ENCODE measurements at regions of chr17 and their contacts with region 1.

Region 1: GRCh38 chr17:64975329-64976087 is 56.2 kb upstream of the LRRC37A3 start:
- DNase-seq: peak; percentile 96 to 98
- ATAC-seq: peak; percentile 92 to 96
- H3K4me3 ChIP-seq: peak overlapping the region; percentile 73
- H3K27ac ChIP-seq: peak overlapping the region; percentile 95 to 96
- H3K4me1 ChIP-seq: peaks cover 14% of the 10 kb centered on the region
- CTCF ChIP-seq: no peak
- EP300 ChIP-seq: no peak
- POLR2A ChIP-seq: peak; percentile 75
- RAD21 ChIP-seq: peak in 1 of 2 experiments; percentile 40; a peak in 2 of 5 replicates

Region 2: GRCh38 chr17:64991726-64992125 is 16.2 kb after region 1 on chr17:
- CTCF ChIA-PET with region 1: interaction called, 4 read pairs
- POLR2A ChIA-PET with region 1: interaction called, 22 read pairs
- DNase-seq: no peak
- ATAC-seq: no peak
- H3K4me3 ChIP-seq: no peak overlapping the region
- H3K27ac ChIP-seq: peak overlapping the region; percentile 74 to 77
- H3K4me1 ChIP-seq: peaks cover 44% of the 10 kb centered on the region
- CTCF ChIP-seq: no peak
- EP300 ChIP-seq: no peak
- POLR2A ChIP-seq: no peak
- RAD21 ChIP-seq: no peak

Region 3: GRCh38 chr17:65017207-65017774 is 41.8 kb after region 1 on chr17:
- CTCF ChIA-PET with region 1: interaction called, 5 read pairs
- POLR2A ChIA-PET with region 1: interaction called, 24 read pairs
- DNase-seq: no peak
- ATAC-seq: peak; percentile 44 to 66; a peak in 3 of 6 replicates
- H3K4me3 ChIP-seq: peak overlapping the region; percentile 12; the same call in 1 of the 3 replicates
- H3K27ac ChIP-seq: peak overlapping the region; percentile 78
- H3K4me1 ChIP-seq: peaks cover 73% of the 10 kb centered on the region
- CTCF ChIP-seq: no peak
- EP300 ChIP-seq: no peak
- POLR2A ChIP-seq: no peak
- RAD21 ChIP-seq: no peak

Region 4: DNA sequence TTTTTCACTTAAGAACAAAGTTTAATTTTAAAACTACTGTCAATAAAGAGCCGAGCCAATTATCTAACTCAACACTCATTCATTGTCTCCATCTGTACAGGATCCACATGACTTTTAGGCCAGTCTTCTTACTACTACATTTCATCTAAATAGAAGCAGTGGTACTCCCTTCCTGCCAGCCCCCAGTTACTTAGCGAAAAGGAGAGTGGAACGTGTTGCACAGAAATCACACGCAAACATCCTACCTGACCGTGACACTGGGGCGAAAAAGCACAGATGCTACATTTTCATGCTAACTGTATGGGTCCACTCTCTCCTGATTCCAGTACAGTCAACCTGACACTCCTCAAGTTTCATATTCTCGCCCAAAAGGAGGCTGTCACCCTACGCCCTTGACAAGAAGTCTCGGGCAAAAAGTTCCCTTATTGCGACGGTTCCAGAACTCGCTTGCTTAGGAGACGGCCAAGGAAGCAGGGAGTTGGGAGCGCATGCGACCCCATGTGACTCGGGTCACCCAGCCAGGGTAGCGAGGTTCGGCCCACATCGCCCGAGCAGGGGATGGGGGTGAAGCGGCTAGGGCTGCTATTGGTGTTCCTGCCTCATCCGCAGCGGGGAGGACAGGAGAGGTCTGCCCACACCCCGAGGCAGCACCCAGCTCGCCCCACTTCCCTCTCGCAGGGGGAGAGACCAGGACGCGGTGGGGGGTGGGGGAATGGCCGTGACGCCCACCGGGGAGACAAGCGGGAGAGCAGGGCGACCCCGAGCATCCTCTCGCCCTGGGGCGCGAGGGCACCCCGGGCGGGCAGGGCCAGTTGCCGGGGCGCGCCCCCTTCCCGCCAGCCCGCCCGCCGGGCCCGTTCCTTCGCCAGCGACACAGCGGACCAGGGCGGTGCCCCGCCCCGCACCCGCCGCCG is 80.1 kb after region 1 on chr17:
- CTCF ChIA-PET with region 1: interaction called, 3 read pairs
- POLR2A ChIA-PET with region 1: interaction called, 34 read pairs
- DNase-seq: peak; percentile 65 to 73
- ATAC-seq: peak; percentile 76 to 78
- H3K4me3 ChIP-seq: peak overlapping the region; percentile 82
- H3K27ac ChIP-seq: peak overlapping the region; percentile 92 to 97
- H3K4me1 ChIP-seq: peaks cover 23% of the 10 kb centered on the region
- CTCF ChIP-seq: no peak
- EP300 ChIP-seq: no peak
- POLR2A ChIP-seq: peak; percentile 39
- RAD21 ChIP-seq: no peak; a peak in 1 of 5 replicates

Measured in A549 (cell line).